MCF 10A (cell line): ENCODE measurements at regions of chr6 and their contacts with region 1.

Region 1: DNA sequence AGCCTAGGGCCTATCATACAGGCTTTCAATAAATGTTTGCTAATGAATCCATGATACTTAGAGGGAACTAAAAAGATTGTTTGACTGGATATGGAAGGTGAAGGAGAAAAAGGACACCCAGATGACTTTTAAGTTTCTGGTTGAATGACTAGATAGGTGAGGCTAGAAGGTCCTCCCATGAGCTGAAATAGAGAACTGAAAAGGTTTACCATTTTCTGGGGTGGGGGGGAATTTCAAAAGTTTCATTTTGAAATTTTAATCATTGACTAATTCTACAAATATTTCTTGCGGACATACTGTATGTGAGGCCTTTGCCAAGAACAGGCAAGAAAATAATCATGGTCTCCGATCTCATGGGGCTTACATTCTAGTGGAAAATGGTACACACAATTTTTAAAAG is 17.9 kb upstream of the ZBTB2 start:
- DNase-seq: no peak
- H3K4me3 Mint-ChIP-seq: no peak overlapping the region
- H3K27ac Mint-ChIP-seq: peak overlapping the region; percentile 52
- H3K4me1 Mint-ChIP-seq: peaks cover 5% of the 10 kb centered on the region
- H3K27me3 Mint-ChIP-seq: no peaks in the 10 kb centered on the region
- CTCF ChIP-seq: no peak

Region 2: GRCh38 chr6:151390276-151391032 is 18.8 kb before region 1 on chr6:
- CTCF ChIA-PET with region 1: interaction called, 40 read pairs
- POLR2A ChIA-PET with region 1: interaction called, 8 read pairs
- intact Hi-C with region 1: no loop called
- DNase-seq: peak; percentile 99
- H3K4me3 Mint-ChIP-seq: peak overlapping the region; percentile 88
- H3K27ac Mint-ChIP-seq: peak overlapping the region; percentile 74
- H3K4me1 Mint-ChIP-seq: peaks cover 25% of the 10 kb centered on the region
- H3K27me3 Mint-ChIP-seq: no peaks in the 10 kb centered on the region
- CTCF ChIP-seq: no peak

Region 3: GRCh38 chr6:151425561-151425960 is 16.3 kb after region 1 on chr6:
- CTCF ChIA-PET with region 1: interaction called, 17 read pairs
- POLR2A ChIA-PET with region 1: interaction called, 3 read pairs
- intact Hi-C with region 1: no loop called
- DNase-seq: no peak
- H3K4me3 Mint-ChIP-seq: no peak overlapping the region
- H3K27ac Mint-ChIP-seq: no peak overlapping the region
- H3K4me1 Mint-ChIP-seq: no peaks in the 10 kb centered on the region
- H3K27me3 Mint-ChIP-seq: no peaks in the 10 kb centered on the region
- CTCF ChIP-seq: no peak

Region 4: DNA sequence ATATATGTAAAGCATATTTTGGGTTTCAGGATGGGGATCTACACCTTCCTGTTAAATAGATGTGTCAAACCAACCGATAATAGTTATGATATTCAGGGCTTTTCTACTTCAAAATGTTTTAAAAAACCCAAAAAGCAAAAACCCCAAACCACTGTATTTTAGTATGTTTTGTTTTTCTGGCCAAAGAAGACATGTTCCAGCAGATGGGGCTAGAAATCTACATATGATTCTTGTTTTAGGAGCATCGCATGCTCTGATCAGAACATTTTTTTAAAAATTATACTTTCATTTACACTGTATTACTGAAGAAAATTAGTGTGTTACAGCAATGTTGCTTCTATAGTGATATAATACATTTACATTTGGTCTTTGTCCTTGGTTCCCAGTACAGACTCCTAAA is 31.7 kb after region 1 on chr6:
- CTCF ChIA-PET with region 1: interaction called, 10 read pairs
- POLR2A ChIA-PET with region 1: no interaction called
- intact Hi-C with region 1: no loop called
- DNase-seq: no peak
- H3K4me3 Mint-ChIP-seq: no peak overlapping the region
- H3K27ac Mint-ChIP-seq: no peak overlapping the region
- H3K4me1 Mint-ChIP-seq: peaks cover 23% of the 10 kb centered on the region
- H3K27me3 Mint-ChIP-seq: no peaks in the 10 kb centered on the region
- CTCF ChIP-seq: peak; percentile 43

Region 5: DNA sequence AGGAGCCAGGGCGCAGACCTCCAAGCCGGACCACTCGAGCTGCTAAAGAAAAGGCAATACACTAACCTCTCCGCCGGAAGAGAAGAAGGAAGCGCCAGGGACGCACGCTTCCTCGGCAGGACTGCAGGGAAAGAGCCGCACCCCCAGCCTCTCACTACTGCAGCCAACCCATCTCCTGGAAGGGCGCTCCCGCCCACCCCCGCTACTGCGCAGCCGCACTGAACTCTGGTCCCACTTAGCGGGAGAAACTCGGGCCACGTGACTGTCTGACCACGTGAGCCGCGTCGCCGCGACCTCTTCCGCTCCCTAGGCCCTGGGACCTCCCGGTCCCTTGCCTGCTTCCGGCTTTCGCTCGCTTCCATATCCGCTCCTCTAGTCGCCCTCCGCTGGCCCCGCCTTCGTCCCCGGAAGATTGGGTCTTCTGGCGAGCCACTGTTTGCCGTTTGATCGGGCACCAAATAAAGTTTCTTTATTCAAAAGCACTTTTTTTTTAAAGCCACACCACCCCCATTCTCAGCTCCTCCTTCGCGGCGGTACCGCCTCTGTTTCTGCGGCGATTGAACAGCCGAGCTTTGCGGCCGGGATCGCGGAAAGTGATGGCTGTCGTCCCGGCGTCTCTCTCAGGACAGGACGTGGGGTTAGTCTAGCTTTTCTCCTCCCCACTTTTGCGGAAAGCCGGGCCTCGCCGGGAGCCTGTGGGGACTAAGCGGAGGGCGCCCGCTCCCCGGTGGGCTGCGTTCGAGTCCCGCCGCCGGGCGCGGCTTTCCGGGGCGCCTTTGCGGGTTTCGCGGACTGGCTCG is 42.9 kb after region 1 on chr6 and contains the start of gene RMND1:
- CTCF ChIA-PET with region 1: no interaction called
- POLR2A ChIA-PET with region 1: interaction called, 17 read pairs
- intact Hi-C with region 1: no loop called
- DNase-seq: peak; percentile 100
- H3K4me3 Mint-ChIP-seq: peak within 1 kb of the TSS; percentile 99
- H3K27ac Mint-ChIP-seq: peak within 1 kb of the TSS; percentile 87
- H3K4me1 Mint-ChIP-seq: peaks cover 36% of the 10 kb centered on the region
- H3K27me3 Mint-ChIP-seq: no peaks in the 10 kb centered on the region
- CTCF ChIP-seq: no peak
- total RNA-seq, gene RMND1: 32.9 and 37.6 TPM in 2 replicates

Region 6: GRCh38 chr6:151475653-151476523 is 66.6 kb after region 1 on chr6:
- CTCF ChIA-PET with region 1: interaction called, 7 read pairs
- POLR2A ChIA-PET with region 1: no interaction called
- intact Hi-C with region 1: loop called (anchors 1 kb)
- DNase-seq: peak; percentile 69
- H3K4me3 Mint-ChIP-seq: no peak overlapping the region
- H3K27ac Mint-ChIP-seq: no peak overlapping the region
- H3K4me1 Mint-ChIP-seq: no peaks in the 10 kb centered on the region
- H3K27me3 Mint-ChIP-seq: no peaks in the 10 kb centered on the region
- CTCF ChIP-seq: peak; percentile 68